Adrenal gland (tissue), 19 donors: ENCODE measurements at regions of chr7 and their contacts with region 1.

Region 1: GRCh38 chr7:105652359-105652993 is 71.2 kb upstream of the EFCAB10 start:
- DNase-seq: peak; percentile 71 to 93 (median 87)
- H3K4me3 ChIP-seq: no peak overlapping the region
- H3K27ac ChIP-seq: no peak overlapping the region
- H3K4me1 ChIP-seq: peaks cover 0 to 19% of the 10 kb centered on the region in 2 donors
- H3K27me3 ChIP-seq: no peaks in the 10 kb centered on the region
- CTCF ChIP-seq: peak; percentile 74 to 93 (median 87)
- POLR2A ChIP-seq: no peak

Region 2: GRCh38 chr7:105876091-105876963 is 223.9 kb after region 1 on chr7 and contains the start of gene ATXN7L1:
- intact Hi-C with region 1: loop called in 1 of 2 experiments (anchors 10 kb)
- DNase-seq: peak; percentile 96 to 98 (median 97)
- H3K4me3 ChIP-seq: peak within 1 kb of the TSS in 3 of 4 donors; percentile 26 to 72 (median 69)
- H3K27ac ChIP-seq: peak within 1 kb of the TSS; percentile 34 to 96 (median 89)
- H3K4me1 ChIP-seq: peaks cover 16 to 20% of the 10 kb centered on the region in 2 donors
- H3K27me3 ChIP-seq: no peaks in the 10 kb centered on the region
- CTCF ChIP-seq: peak in 4 of 6 experiments; percentile 16 to 93 (median 68)
- POLR2A ChIP-seq: peak in 1 of 2 donors; percentile 94
- total RNA-seq, gene ATXN7L1: 3.6 to 24.6 (median 12.8) TPM

Region 3: GRCh38 chr7:105896407-105896911 is 244.0 kb after region 1 on chr7:
- intact Hi-C with region 1: loop called in 1 of 2 experiments (anchors 10 kb)
- DNase-seq: no peak
- H3K4me3 ChIP-seq: no peak overlapping the region
- H3K27ac ChIP-seq: no peak overlapping the region
- H3K4me1 ChIP-seq: no peaks in the 10 kb centered on the region
- H3K27me3 ChIP-seq: no peaks in the 10 kb centered on the region
- CTCF ChIP-seq: no peak
- POLR2A ChIP-seq: no peak

Region 4: DNA sequence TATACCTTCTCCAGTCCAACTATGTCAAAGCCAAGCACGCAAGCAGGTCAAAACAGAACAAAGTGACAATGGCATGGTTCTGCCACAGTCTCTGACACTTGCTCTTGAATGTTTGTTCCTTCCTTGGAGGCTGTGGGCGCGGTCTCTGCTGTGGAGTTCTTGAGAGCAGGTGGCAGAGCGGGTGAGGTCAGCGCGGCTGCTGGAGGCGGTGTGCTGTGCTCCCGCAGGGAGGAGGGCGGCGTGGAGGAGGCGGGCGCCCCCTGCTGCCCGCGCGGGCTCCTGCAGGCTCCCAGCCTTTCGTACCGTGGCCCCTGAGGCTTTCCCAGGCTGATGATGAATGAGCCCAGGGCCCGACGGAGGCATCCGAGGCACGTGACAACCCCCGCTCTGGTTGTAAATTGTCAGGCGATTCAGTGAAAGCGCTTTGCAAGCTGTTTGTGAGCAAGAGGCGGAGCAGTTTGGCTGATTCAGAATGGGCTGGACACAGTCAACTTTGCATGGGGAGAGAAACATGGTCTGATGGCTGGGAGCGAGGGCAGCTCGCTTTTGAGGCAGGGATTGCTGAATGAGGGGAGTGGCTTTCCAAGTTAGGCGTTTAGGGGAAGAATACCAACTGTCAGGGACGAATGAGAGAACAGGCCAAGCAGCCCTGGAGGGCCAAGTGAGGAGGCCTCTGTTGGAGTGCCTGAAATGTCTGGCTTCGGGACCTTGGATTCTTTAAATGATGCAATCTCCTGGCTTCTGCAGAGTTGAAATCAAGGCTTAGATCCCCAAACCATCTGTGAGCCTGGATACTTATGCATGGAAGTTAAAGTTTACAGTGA is 357.1 kb after region 1 on chr7:
- intact Hi-C with region 1: loop called in 1 of 2 experiments (anchors 10 kb)
- DNase-seq: peak; percentile 85 to 93 (median 91)
- H3K4me3 ChIP-seq: peak overlapping the region in 1 of 4 donors; percentile 43
- H3K27ac ChIP-seq: peak overlapping the region; percentile 12 to 83 (median 53)
- H3K4me1 ChIP-seq: peaks cover 3 to 18% of the 10 kb centered on the region in 2 donors
- H3K27me3 ChIP-seq: no peaks in the 10 kb centered on the region
- CTCF ChIP-seq: peak; percentile 86 to 98 (median 94)
- POLR2A ChIP-seq: peak in 1 of 2 donors; percentile 65

Region 5: DNA sequence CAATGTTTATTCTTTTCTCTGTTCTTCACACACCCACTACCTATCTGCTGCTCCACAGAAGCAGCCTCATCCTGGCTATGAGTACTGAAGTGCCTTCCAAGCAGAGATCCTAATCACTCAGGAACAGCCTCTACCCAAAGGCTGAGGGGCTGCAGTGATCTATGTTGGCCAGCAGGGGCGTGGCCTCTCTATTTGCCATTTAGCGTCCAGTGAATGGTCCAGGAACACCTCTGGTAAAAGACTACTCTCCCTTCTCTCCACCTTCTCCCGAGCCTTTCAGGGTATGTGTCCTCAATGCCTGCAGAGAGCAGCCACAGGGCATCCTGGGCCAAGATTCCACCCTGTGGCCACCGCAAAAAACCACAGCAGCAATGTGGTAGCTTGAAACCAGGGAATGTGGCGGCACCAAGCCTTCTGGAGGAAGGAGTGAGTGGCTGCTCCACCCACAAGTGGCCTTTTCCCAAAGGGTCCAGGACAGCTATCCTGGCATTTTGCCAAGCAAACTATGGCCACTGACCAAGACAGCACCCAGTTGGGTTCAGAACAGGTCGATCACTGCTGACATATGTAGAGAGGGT is 388.8 kb after region 1 on chr7:
- intact Hi-C with region 1: loop called (anchors 5 to 10 kb)
- DNase-seq: peak in 5 of 7 donors; percentile 27 to 61 (median 50)
- H3K4me3 ChIP-seq: no peak overlapping the region
- H3K27ac ChIP-seq: no peak overlapping the region
- H3K4me1 ChIP-seq: peaks cover 4 to 7% of the 10 kb centered on the region in 2 donors
- H3K27me3 ChIP-seq: no peaks in the 10 kb centered on the region
- CTCF ChIP-seq: peak; percentile 43 to 65 (median 56)
- POLR2A ChIP-seq: no peak